Left ventricle myocardium inferior (tissue), 1 donor: ENCODE measurements at regions of chr21 and their contacts with region 1.

Region 1: DNA sequence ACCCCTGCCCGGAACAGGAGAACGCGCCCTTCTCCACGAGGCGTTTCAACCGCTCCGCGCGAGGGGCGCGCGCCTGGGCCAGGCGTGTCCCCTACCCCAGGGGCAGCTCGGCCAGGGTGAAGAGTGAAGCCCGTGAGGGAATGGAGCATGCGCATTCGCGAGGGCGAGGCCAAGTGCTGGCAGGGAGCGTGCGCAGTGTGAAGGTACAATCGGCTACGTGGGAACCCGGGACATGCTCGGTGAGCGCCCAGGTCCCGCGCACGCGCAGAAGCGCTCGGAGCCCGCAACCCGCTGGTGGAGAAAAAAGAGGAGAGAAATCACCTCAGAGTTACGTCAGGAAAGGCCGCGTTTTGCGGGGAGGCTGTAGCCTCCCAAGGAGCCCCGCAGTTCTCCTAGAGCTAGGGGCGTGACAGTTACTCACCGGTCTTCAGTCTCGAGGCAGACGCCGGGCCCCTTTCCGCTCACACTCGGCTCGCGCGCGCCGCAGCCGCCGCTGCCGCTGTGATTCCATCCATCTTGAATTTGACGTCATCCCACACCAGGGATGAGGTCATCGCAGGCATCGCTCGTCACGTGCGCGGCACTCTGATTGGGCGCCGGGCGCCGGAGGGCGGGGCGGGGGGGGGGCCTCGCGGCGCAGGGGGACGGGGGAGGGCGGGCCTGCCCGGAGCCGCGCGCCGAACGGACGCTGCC is at the start of gene ZBTB21:
- DNase-seq: peak; percentile 98
- H3K4me3 ChIP-seq: peak within 1 kb of the TSS; percentile 90
- H3K27ac ChIP-seq: peak within 1 kb of the TSS; percentile 100
- H3K4me1 ChIP-seq: peaks cover 38% of the 10 kb centered on the region
- H3K27me3 ChIP-seq: no peaks in the 10 kb centered on the region
- CTCF ChIP-seq: no peak
- total RNA-seq, gene ZBTB21: 4.9 TPM

Region 2: DNA sequence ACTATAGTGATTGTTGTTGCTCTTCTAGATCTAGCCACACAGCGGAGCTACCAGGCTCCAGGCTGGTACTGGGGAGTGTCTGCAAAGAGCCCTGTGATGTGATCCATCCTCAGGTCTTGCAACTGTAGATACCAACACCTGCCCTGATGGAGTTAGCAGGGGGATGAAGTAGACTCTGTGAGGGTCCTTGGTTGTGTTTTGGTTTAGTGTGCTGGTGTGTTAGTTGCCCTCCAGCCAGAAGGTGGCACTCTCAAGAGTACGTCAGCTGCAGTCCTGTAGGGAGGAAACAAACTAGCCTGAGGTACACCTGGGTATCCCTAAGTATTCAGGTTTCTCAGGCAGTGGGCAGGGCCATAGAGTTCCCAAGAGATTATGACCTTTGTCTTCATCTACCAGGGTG is 420.8 kb before region 1 on chr21:
- intact Hi-C with region 1: no loop called
- DNase-seq: no peak
- H3K4me3 ChIP-seq: no peak overlapping the region
- H3K27ac ChIP-seq: no peak overlapping the region
- H3K4me1 ChIP-seq: no peaks in the 10 kb centered on the region
- H3K27me3 ChIP-seq: peaks cover 33% of the 10 kb centered on the region
- CTCF ChIP-seq: no peak

Region 3: DNA sequence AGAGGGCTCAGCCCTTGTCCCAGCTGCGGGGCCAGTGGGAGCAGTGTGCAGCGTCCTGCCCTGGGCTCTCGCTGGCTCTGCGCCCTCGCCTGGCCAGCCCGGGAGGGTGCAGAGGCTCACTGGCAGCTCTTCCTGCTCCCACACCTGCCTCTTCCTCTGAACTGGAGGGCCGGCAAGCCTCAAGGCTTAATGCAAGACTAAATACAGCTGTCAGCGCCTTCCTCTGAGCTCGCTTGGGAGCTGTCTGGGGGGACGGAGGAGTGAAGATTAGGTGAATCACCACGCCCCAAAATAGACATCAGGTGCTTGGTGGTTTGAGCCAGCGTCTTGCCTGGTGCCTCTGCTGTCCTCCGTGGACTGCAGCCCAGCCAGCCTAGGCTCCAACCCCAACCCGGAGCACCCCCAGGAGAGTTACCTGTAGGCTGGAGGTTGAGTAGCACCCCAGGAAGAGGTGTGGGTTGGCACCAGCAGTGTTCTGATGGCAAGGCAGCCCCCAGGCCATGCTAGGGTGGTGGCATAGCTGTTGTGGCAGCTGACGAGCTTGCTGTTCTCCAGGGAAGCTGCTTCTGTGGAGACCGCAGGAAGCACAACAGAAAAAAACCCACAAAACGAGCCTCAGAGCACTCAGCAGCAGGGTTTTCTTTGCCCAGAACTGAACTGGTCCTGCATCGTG is 98.0 kb after region 1 on chr21:
- intact Hi-C with region 1: loop called (anchors 10 kb)
- DNase-seq: peak; percentile 56
- H3K4me3 ChIP-seq: peak overlapping the region; percentile 42
- H3K27ac ChIP-seq: peak overlapping the region; percentile 66
- H3K4me1 ChIP-seq: peaks cover 16% of the 10 kb centered on the region
- H3K27me3 ChIP-seq: peaks cover 66% of the 10 kb centered on the region
- CTCF ChIP-seq: peak; percentile 86